ENCODE measurements at regions of chr1 and their contacts with region 1.

Region 1: GRCh38 chr1:96362623-96363022 is 359.0 kb upstream of the PTBP2 start:
- DNase-seq: peak; percentile 99
- ATAC-seq: peak; percentile 85
- H3K4me3 ChIP-seq: no peak overlapping the region
- H3K27ac ChIP-seq: peak overlapping the region; percentile 65
- H3K4me1 ChIP-seq: peaks cover 24% of the 10 kb centered on the region
- H3K27me3 ChIP-seq: no peaks in the 10 kb centered on the region
- CTCF ChIP-seq: no peak
- POLR2A ChIP-seq: no peak
- RAD21 ChIP-seq: 0 out of 2 replicates have a peak, but pooled peaks have one; percentile 18

Region 2: DNA sequence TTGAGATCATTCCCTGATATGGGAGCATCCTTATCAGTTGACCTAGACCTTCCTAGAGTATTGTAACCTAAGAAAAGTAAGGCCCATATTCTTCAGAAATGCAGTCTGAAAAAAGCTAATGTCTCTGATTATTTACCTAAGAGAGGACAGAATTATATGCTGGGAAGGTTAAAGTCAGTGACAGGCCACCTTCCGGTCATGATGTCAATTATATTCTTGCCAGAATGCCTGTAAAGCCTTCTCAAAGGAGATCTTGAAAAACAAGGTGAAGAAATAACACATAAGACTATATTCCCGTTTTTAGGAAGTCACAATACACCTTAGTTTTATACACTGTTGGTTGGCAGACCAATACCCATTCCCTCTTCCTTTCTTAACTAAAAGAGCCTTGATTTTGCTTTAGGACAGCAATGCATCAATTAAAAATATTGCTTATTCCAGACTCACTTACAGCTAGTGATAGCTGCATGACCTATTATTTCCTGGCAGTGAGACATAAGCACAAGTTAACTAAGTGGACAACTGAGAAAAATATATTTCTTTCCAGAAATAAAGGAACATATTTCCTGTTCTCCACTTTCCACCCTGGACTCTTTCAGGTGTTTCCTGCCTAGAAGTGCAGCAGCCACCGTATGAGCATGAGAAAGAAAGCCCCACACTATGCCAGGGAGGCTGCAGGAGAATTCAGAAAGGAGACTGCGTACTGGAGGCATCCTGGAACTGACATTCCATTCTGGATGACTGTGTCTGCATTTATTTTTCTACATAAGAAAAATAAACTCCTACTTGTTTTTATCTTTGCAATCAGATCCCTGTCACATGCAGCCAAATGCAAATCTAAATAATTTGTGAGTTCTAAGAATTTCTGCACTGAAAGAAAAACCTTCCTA is 26.0 kb after region 1 on chr1:
- CTCF ChIA-PET with region 1: no interaction called
- POLR2A ChIA-PET with region 1: no interaction called
- dilution Hi-C with region 1: no loop called
- in situ Hi-C with region 1: no loop called
- intact Hi-C with region 1: no loop called
- DNase-seq: peak; percentile 87
- ATAC-seq: peak; percentile 99
- H3K4me3 ChIP-seq: no peak overlapping the region
- H3K27ac ChIP-seq: no peak overlapping the region
- H3K4me1 ChIP-seq: peaks cover 7% of the 10 kb centered on the region
- H3K27me3 ChIP-seq: no peaks in the 10 kb centered on the region
- CTCF ChIP-seq: no peak
- POLR2A ChIP-seq: no peak
- RAD21 ChIP-seq: no peak

Region 3: GRCh38 chr1:96416111-96416595 is 53.5 kb after region 1 on chr1:
- CTCF ChIA-PET with region 1: no interaction called
- POLR2A ChIA-PET with region 1: no interaction called
- dilution Hi-C with region 1: no loop called
- in situ Hi-C with region 1: no loop called
- intact Hi-C with region 1: loop called (anchors 2 kb)
- DNase-seq: peak; percentile 99
- ATAC-seq: peak; percentile 96
- H3K4me3 ChIP-seq: no peak overlapping the region
- H3K27ac ChIP-seq: peak overlapping the region; percentile 47; the same call in 1 of the 2 replicates
- H3K4me1 ChIP-seq: no peaks in the 10 kb centered on the region
- H3K27me3 ChIP-seq: peaks cover 2% of the 10 kb centered on the region; the same call in 1 of the 2 replicates
- CTCF ChIP-seq: no peak
- POLR2A ChIP-seq: no peak
- RAD21 ChIP-seq: peak; percentile 21; the same call in 1 of the 2 replicates

Region 4: GRCh38 chr1:96538111-96538641 is 175.6 kb after region 1 on chr1:
- CTCF ChIA-PET with region 1: no interaction called
- POLR2A ChIA-PET with region 1: no interaction called
- dilution Hi-C with region 1: no loop called
- in situ Hi-C with region 1: no loop called
- intact Hi-C with region 1: loop called (anchors 5 kb)
- DNase-seq: peak; percentile 68
- ATAC-seq: peak; percentile 58
- H3K4me3 ChIP-seq: no peak overlapping the region
- H3K27ac ChIP-seq: peak overlapping the region; percentile 64; the same call in 1 of the 2 replicates
- H3K4me1 ChIP-seq: peaks cover 8% of the 10 kb centered on the region
- H3K27me3 ChIP-seq: no peaks in the 10 kb centered on the region
- CTCF ChIP-seq: no peak
- POLR2A ChIP-seq: no peak
- RAD21 ChIP-seq: no peak